ENCODE measurements at regions of chr14 and their contacts with region 1.

Region 1: DNA sequence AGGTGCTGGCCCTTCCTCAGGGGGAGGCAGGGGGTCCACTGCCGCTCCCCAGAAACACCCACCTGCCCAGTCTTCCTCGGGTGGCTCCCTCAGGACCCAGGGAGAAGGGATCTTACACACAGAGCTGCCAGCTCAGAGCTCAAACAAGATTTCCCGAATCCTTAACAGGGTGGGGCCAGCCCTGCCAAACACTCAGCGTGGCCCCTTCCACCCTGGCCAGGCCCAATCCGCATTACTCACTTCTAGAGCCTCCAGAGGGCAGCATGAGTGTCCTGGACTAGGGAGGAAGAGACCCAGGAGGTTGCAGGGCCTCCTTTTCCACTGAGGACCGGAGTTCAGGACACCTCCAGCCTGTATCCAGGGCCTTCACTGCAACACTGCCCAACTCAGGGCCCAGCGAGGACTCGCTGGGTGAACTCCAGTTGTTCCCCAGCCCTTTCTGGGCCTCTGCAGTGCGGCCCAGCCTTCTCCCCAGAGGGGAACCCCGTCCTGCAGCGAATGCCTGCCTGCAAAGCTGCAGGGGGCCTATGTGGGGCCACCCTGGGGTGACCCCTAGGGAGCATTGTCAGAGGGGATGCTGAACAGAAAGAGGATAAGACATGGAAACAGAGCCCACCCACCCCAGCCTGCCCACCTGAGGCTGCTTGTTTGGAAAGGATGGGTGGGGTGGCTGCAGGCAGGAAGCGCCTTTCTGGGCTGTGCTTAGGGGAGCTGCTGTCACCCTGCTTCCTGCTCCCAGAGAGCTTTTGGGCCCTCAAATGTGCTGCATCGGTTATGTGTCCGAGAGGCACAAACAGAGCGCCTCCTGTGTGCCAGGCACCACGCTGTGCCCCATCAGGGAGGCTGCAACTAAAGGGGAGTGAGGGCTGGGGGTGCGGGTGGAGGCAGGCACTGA is 43.8 kb downstream of the CCNK start:
- DNase-seq: no peak
- ATAC-seq: peak; percentile 57
- H3K4me3 Mint-ChIP-seq: no peak overlapping the region
- H3K27ac Mint-ChIP-seq: peak overlapping the region; percentile 60
- H3K4me1 Mint-ChIP-seq: peaks cover 52% of the 10 kb centered on the region
- H3K27me3 Mint-ChIP-seq: no peaks in the 10 kb centered on the region
- CTCF ChIP-seq: no peak

Region 2: GRCh38 chr14:99230208-99231151 is 294.6 kb before region 1 on chr14:
- CTCF ChIA-PET with region 1: no interaction called
- POLR2A ChIA-PET with region 1: no interaction called
- DNase-seq: no peak
- ATAC-seq: no peak
- H3K4me3 Mint-ChIP-seq: peak overlapping the region; percentile 65
- H3K27ac Mint-ChIP-seq: peak overlapping the region; percentile 93
- H3K4me1 Mint-ChIP-seq: peaks cover 60% of the 10 kb centered on the region
- H3K27me3 Mint-ChIP-seq: no peaks in the 10 kb centered on the region
- CTCF ChIP-seq: no peak

Region 3: DNA sequence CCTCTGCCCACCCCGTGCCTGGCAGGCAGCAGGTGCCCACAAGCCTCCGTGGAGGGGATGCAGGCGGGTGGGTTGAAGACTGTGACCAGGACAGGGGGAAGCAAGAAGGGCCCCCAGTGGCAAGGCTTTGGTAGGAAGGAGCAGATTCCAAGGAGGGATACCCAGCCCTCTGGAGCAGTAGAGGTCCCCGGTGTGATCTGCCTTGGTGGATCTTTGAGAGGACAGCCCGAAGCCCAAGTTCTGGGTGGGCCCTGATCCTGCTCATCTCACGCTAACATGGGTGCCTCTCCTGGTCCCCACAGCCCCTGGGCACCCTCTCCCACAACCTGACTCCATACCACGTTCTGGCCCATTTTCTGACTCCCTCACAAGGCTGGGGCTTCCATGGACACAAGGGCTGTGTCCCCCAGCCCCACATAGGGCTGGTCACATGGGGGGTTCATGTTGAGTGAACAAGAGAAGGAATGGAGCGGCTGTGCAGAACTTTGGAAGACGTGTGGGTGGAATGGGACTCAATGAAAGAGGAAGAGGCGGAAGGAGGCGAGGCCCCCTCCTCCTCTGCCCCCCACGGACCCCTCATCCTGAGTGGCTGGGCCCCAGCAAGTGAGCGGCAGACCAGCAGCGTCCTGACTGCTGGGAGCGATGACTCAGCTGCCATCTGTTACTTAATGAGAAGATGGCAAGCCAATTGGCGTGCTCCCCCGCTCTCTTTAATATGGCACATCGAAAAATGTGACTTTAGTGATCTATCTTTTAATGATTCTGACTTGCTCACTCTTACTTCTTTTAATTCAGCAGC is 176.0 kb before region 1 on chr14:
- CTCF ChIA-PET with region 1: no interaction called
- POLR2A ChIA-PET with region 1: no interaction called
- DNase-seq: no peak
- ATAC-seq: no peak
- H3K4me3 Mint-ChIP-seq: no peak overlapping the region
- H3K27ac Mint-ChIP-seq: no peak overlapping the region
- H3K4me1 Mint-ChIP-seq: peaks cover 4% of the 10 kb centered on the region; the same call in 1 of the 2 replicates
- H3K27me3 Mint-ChIP-seq: no peaks in the 10 kb centered on the region
- CTCF ChIP-seq: no peak

Region 4: DNA sequence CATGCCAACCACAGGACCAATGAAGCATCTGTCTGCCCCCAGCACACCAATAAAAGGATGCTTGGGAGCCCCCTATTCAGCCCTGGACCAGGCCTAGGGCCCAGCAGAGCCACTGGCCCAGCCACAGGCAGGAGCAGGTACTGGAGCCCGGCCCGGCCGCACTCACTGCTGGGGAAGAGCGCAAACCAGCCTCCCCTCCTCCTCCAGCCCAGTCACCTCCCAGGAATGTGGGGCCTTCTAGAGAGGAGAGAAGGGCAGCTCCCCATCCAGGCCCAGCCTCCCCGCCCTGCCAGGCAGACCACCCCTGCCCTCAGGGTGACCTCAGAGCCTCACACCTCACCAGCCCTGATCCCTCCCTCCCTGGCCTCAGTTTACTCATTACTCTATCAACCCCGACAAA is 12.3 kb after region 1 on chr14:
- CTCF ChIA-PET with region 1: interaction called, 24 read pairs
- POLR2A ChIA-PET with region 1: interaction called, 3 read pairs
- DNase-seq: peak; percentile 37
- ATAC-seq: peak; percentile 64
- H3K4me3 Mint-ChIP-seq: no peak overlapping the region
- H3K27ac Mint-ChIP-seq: no peak overlapping the region
- H3K4me1 Mint-ChIP-seq: peaks cover 27% of the 10 kb centered on the region
- H3K27me3 Mint-ChIP-seq: no peaks in the 10 kb centered on the region
- CTCF ChIP-seq: no peak

Region 5: GRCh38 chr14:99604283-99604765 is 79.3 kb after region 1 on chr14:
- CTCF ChIA-PET with region 1: interaction called, 10 read pairs
- POLR2A ChIA-PET with region 1: no interaction called
- DNase-seq: peak; percentile 95
- ATAC-seq: peak; percentile 92
- H3K4me3 Mint-ChIP-seq: peak overlapping the region; percentile 85
- H3K27ac Mint-ChIP-seq: no peak overlapping the region
- H3K4me1 Mint-ChIP-seq: peaks cover 29% of the 10 kb centered on the region
- H3K27me3 Mint-ChIP-seq: peaks cover 34% of the 10 kb centered on the region
- CTCF ChIP-seq: no peak

Region 6: DNA sequence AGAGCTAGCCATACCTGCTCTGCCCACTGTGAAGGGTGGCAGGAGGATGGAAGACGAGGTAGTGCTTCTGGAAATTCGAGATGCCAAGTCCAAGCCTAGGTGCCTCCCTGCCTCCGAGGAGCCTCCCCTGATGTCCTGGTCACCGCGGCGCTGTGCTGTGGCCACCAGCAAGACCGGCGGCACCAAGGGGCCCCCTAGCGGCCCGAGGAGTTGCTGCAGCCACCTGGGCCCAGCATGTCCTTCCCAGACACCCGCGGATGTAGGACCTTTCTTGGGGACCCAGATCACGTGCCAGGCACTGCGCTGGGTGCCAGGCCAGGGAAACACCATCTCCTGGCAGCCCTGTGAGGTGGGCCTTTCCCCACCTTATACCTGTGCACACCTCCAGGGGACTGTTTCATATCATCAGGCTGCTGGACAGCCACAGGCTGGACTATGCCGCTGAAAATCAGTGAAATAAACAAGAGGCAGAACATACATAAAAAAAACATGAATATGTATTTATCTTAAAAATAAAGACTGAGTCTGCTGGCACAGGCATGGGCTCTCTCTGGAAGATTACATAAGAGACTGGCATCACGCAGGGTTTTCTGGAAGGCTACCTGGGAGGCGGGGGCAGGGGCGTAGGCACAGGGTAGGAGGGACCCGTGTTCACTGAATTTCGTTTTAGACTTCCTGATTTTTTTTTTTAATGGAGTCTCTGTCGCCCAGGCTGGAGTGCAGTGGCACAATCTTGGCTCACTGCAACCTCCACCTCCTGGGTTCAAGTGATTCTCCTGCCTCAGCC is 104.0 kb after region 1 on chr14:
- CTCF ChIA-PET with region 1: interaction called, 12 read pairs
- POLR2A ChIA-PET with region 1: no interaction called
- DNase-seq: peak; percentile 84
- ATAC-seq: peak; percentile 91
- H3K4me3 Mint-ChIP-seq: no peak overlapping the region
- H3K27ac Mint-ChIP-seq: no peak overlapping the region
- H3K4me1 Mint-ChIP-seq: peaks cover 15% of the 10 kb centered on the region
- H3K27me3 Mint-ChIP-seq: no peaks in the 10 kb centered on the region
- CTCF ChIP-seq: peak; percentile 98

Measured in WTC11 (cell line).